B cell (primary cell): ENCODE measurements at regions of chr20 and their contacts with region 1.

Region 1: GRCh38 chr20:58907399-58908137 is 55.1 kb downstream of the GNAS start:
- DNase-seq: peak; percentile 95
- ATAC-seq: peak; percentile 84
- H3K4me3 ChIP-seq: peak overlapping the region; percentile 24 to 54 (median 33)
- H3K4me3 Mint-ChIP-seq: peak overlapping the region; percentile 85
- H3K27ac ChIP-seq: peak overlapping the region; percentile 94 to 97
- H3K27ac Mint-ChIP-seq: peak overlapping the region; percentile 94
- H3K4me1 ChIP-seq: peaks cover 24 to 37% of the 10 kb centered on the region in 2 donors
- H3K4me1 Mint-ChIP-seq: peaks cover 59% of the 10 kb centered on the region
- H3K27me3 ChIP-seq: no peaks in the 10 kb centered on the region
- H3K27me3 Mint-ChIP-seq: no peaks in the 10 kb centered on the region
- CTCF ChIP-seq: no peak

Region 2: GRCh38 chr20:58634521-58635278 is 272.9 kb before region 1 on chr20:
- CTCF ChIA-PET with region 1: no interaction called
- POLR2A ChIA-PET with region 1: no interaction called
- intact Hi-C with region 1: no loop called
- DNase-seq: peak; percentile 54
- ATAC-seq: peak; percentile 80
- H3K4me3 ChIP-seq: peak overlapping the region in 4 of 5 experiments; percentile 36 to 55 (median 46)
- H3K4me3 Mint-ChIP-seq: peak overlapping the region; percentile 90
- H3K27ac ChIP-seq: peak overlapping the region in 1 of 2 donors; percentile 25
- H3K27ac Mint-ChIP-seq: no peak overlapping the region
- H3K4me1 ChIP-seq: peaks cover 13 to 15% of the 10 kb centered on the region in 2 donors
- H3K4me1 Mint-ChIP-seq: peaks cover 14% of the 10 kb centered on the region
- H3K27me3 ChIP-seq: peaks cover 0 to 32% (median 12%) of the 10 kb centered on the region in 4 experiments
- H3K27me3 Mint-ChIP-seq: peaks cover 40% of the 10 kb centered on the region
- CTCF ChIP-seq: no peak

Region 3: GRCh38 chr20:58800134-58800656 is 107.4 kb before region 1 on chr20:
- CTCF ChIA-PET with region 1: no interaction called
- POLR2A ChIA-PET with region 1: no interaction called
- intact Hi-C with region 1: no loop called
- DNase-seq: no peak
- ATAC-seq: no peak
- H3K4me3 ChIP-seq: no peak overlapping the region
- H3K4me3 Mint-ChIP-seq: no peak overlapping the region
- H3K27ac ChIP-seq: no peak overlapping the region
- H3K27ac Mint-ChIP-seq: no peak overlapping the region
- H3K4me1 ChIP-seq: no peaks in the 10 kb centered on the region
- H3K4me1 Mint-ChIP-seq: no peaks in the 10 kb centered on the region
- H3K27me3 ChIP-seq: peaks cover 0 to 3% (median 0%) of the 10 kb centered on the region in 4 experiments
- H3K27me3 Mint-ChIP-seq: peaks cover 31% of the 10 kb centered on the region
- CTCF ChIP-seq: no peak

Region 4: GRCh38 chr20:59159493-59160376 is 252.2 kb after region 1 on chr20:
- CTCF ChIA-PET with region 1: no interaction called
- POLR2A ChIA-PET with region 1: no interaction called
- intact Hi-C with region 1: loop called (anchors 5 kb)
- DNase-seq: peak; percentile 57
- ATAC-seq: peak; percentile 34
- H3K4me3 ChIP-seq: peak overlapping the region in 2 of 5 experiments; percentile 19 to 30
- H3K4me3 Mint-ChIP-seq: peak overlapping the region; percentile 66
- H3K27ac ChIP-seq: no peak overlapping the region
- H3K27ac Mint-ChIP-seq: peak overlapping the region; percentile 59
- H3K4me1 ChIP-seq: peaks cover 51 to 53% of the 10 kb centered on the region in 2 donors
- H3K4me1 Mint-ChIP-seq: peaks cover 58% of the 10 kb centered on the region
- H3K27me3 ChIP-seq: no peaks in the 10 kb centered on the region
- H3K27me3 Mint-ChIP-seq: peaks cover 3% of the 10 kb centered on the region
- CTCF ChIP-seq: no peak

Region 5: DNA sequence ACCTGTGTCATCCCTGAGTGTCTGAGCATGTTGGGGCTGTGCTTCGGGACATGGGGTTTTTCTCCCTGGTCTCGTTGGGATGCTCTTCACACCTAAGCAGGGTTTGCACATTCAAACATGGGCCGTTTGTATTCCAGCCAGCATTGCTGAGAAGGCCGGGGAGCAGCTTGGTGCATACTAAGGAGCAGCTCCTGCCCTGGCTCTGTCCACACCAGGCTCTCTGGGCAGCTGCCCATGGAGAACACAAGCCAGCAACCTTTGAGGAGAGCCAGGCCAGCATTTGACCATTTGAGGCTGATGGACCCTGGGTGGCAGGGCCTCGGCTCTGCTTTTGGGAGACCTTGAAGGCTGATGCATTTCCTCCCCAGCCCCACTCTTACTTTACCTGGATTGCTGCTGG is 788.9 kb after region 1 on chr20:
- CTCF ChIA-PET with region 1: no interaction called
- POLR2A ChIA-PET with region 1: no interaction called
- intact Hi-C with region 1: no loop called
- DNase-seq: no peak
- ATAC-seq: no peak
- H3K4me3 ChIP-seq: no peak overlapping the region
- H3K4me3 Mint-ChIP-seq: no peak overlapping the region
- H3K27ac ChIP-seq: no peak overlapping the region
- H3K27ac Mint-ChIP-seq: no peak overlapping the region
- H3K4me1 ChIP-seq: no peaks in the 10 kb centered on the region
- H3K4me1 Mint-ChIP-seq: no peaks in the 10 kb centered on the region
- H3K27me3 ChIP-seq: peaks cover 0 to 3% (median 0%) of the 10 kb centered on the region in 4 experiments
- H3K27me3 Mint-ChIP-seq: peaks cover 7% of the 10 kb centered on the region
- CTCF ChIP-seq: no peak